ENCODE measurements at regions of chr4 and their contacts with region 1.

Region 1: DNA sequence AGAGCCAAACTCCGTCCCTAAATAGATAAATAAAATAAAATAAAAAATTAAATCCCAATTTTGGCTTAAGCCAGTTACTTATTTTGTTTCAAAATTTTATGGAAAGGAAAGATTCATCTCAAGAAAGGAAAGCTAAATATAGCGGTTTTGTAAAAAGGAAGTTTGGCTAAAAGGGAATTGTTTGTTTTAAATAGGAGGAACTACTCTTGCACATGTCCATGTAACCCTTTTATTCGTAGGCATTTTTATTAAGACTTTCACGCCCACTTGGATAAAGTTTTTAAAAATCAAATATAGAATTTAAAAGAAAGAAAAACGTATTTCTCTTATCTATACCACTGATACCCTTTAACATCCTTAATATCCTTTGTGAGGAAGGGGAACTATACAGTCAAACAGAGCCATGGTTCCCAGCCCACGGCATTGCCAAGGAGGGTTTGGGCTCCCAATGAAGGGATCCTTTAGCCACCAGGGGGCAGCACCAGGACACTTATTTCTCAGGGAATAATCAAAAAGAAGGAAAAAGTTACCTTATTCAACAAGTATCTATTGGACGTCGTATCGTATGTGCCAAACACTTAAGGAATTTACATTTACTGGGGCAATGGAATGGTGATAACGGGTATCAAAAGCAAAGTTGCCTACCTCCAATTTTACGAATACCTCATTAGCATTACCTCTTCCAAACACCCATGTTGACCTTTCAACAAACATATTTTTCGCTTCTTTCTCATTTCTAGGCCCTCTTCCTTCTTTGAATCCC is 27.7 kb downstream of the CDKN2AIP start:
- DNase-seq: peak; percentile 91
- H3K4me3 Mint-ChIP-seq: no peak overlapping the region
- H3K27ac Mint-ChIP-seq: no peak overlapping the region
- H3K4me1 Mint-ChIP-seq: no peaks in the 10 kb centered on the region
- H3K27me3 Mint-ChIP-seq: no peaks in the 10 kb centered on the region

Region 2: DNA sequence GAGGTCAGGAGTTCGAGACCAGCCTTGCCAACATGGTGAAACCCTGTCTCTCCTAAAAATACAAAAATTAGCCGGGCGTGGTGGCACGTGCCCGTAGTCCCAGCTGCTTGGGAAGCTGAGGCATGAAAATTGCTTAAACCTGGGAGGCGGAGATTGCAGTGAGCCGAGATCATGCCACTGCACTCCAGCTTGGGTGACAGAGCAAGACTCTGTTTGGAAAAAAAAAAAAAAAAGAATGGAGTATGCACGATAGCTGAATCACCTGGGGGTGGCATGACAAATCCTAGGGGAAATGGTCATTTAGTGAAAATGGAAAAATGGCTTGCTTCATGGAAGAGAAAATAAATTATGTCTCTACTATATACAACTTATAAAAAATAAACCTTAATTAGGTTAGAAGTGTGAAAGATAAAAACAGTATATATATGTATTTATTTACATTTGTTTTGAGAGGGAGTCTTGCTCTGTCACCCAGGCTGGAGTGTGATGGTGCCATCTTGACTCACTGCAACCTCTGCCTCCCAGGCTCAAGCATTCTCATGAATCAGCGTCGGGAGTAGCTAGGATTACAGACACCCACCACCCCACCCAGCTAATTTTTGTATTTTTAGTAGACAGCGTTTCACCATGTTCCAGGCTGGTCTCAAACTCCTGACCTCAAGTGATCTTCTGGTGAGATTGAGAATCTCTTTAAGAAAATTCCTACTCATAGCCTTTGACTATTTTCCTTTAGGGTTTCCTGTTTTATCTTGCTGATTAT is 13.5 kb after region 1 on chr4:
- CTCF ChIA-PET with region 1: no interaction called
- intact Hi-C with region 1: no loop called
- DNase-seq: no peak
- H3K4me3 Mint-ChIP-seq: no peak overlapping the region
- H3K27ac Mint-ChIP-seq: no peak overlapping the region
- H3K4me1 Mint-ChIP-seq: no peaks in the 10 kb centered on the region
- H3K27me3 Mint-ChIP-seq: no peaks in the 10 kb centered on the region

Region 3: GRCh38 chr4:183602557-183603027 is 130.5 kb after region 1 on chr4:
- CTCF ChIA-PET with region 1: interaction called, 20 read pairs
- intact Hi-C with region 1: loop called (anchors 1 kb)
- DNase-seq: no peak
- H3K4me3 Mint-ChIP-seq: no peak overlapping the region
- H3K27ac Mint-ChIP-seq: no peak overlapping the region
- H3K4me1 Mint-ChIP-seq: no peaks in the 10 kb centered on the region
- H3K27me3 Mint-ChIP-seq: no peaks in the 10 kb centered on the region

Region 4: GRCh38 chr4:183618681-183619080 is 146.6 kb after region 1 on chr4:
- CTCF ChIA-PET with region 1: interaction called, 3 read pairs
- intact Hi-C with region 1: loop called (anchors 1 kb)
- DNase-seq: no peak
- H3K4me3 Mint-ChIP-seq: no peak overlapping the region
- H3K27ac Mint-ChIP-seq: no peak overlapping the region
- H3K4me1 Mint-ChIP-seq: no peaks in the 10 kb centered on the region
- H3K27me3 Mint-ChIP-seq: peaks cover 2% of the 10 kb centered on the region

Region 5: GRCh38 chr4:183722731-183723560 is 250.8 kb after region 1 on chr4:
- CTCF ChIA-PET with region 1: interaction called, 3 read pairs
- intact Hi-C with region 1: loop called (anchors 1 kb)
- DNase-seq: peak; percentile 53
- H3K4me3 Mint-ChIP-seq: peak overlapping the region; percentile 72
- H3K27ac Mint-ChIP-seq: no peak overlapping the region
- H3K4me1 Mint-ChIP-seq: peaks cover 9% of the 10 kb centered on the region
- H3K27me3 Mint-ChIP-seq: peaks cover 12% of the 10 kb centered on the region

Region 6: GRCh38 chr4:183797445-183798300 is 325.5 kb after region 1 on chr4:
- CTCF ChIA-PET with region 1: no interaction called
- intact Hi-C with region 1: loop called (anchors 2 kb)
- DNase-seq: peak; percentile 32
- H3K4me3 Mint-ChIP-seq: peak overlapping the region; percentile 41
- H3K27ac Mint-ChIP-seq: no peak overlapping the region
- H3K4me1 Mint-ChIP-seq: peaks cover 9% of the 10 kb centered on the region
- H3K27me3 Mint-ChIP-seq: peaks cover 59% of the 10 kb centered on the region

Region 7: DNA sequence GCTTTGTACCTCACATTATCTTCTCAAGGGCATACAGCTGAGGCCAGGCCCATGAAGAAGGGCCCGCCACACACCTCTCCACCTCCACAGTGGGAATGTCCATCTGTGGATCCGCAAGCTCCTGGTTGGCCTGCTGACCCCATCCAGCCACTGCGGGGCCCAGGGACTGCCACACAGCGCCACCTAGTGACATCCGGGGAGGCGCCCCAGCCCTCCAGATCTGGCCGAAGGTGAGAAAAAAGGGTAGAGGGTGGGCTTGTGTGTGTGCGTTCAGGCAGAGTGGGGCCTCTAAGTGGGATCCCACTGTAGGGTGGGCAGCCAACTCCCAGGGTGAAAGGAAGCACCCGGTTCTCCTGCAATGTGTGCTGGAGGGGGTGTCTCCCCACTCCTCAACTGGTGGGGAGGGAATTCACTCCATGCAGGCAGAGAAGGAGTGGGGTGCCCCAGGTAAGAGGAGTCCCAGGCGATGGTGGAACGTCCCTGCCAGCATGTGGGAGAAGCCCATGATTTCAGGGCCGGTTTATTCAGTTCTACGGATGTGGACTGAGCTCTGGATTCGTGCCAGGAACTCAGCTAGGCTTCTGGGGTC is 628.3 kb after region 1 on chr4:
- CTCF ChIA-PET with region 1: no interaction called
- intact Hi-C with region 1: loop called (anchors 5 kb)
- DNase-seq: peak; percentile 49
- H3K4me3 Mint-ChIP-seq: no peak overlapping the region
- H3K27ac Mint-ChIP-seq: no peak overlapping the region
- H3K4me1 Mint-ChIP-seq: no peaks in the 10 kb centered on the region
- H3K27me3 Mint-ChIP-seq: peaks cover 13% of the 10 kb centered on the region